Thyroid gland (tissue), 4 donors: ENCODE measurements at regions of chr13 and their contacts with region 1.

Region 1: GRCh38 chr13:31742097-31742734 is 2.9 kb downstream of the RXFP2 start:
- DNase-seq: peak; percentile 50 to 59
- H3K4me3 ChIP-seq: no peak overlapping the region
- H3K27ac ChIP-seq: no peak overlapping the region
- H3K4me1 ChIP-seq: peaks cover 5 to 6% of the 10 kb centered on the region in 2 donors
- H3K27me3 ChIP-seq: no peaks in the 10 kb centered on the region
- CTCF ChIP-seq: peak; percentile 75 to 100 (median 84)
- POLR2A ChIP-seq: no peak

Region 2: DNA sequence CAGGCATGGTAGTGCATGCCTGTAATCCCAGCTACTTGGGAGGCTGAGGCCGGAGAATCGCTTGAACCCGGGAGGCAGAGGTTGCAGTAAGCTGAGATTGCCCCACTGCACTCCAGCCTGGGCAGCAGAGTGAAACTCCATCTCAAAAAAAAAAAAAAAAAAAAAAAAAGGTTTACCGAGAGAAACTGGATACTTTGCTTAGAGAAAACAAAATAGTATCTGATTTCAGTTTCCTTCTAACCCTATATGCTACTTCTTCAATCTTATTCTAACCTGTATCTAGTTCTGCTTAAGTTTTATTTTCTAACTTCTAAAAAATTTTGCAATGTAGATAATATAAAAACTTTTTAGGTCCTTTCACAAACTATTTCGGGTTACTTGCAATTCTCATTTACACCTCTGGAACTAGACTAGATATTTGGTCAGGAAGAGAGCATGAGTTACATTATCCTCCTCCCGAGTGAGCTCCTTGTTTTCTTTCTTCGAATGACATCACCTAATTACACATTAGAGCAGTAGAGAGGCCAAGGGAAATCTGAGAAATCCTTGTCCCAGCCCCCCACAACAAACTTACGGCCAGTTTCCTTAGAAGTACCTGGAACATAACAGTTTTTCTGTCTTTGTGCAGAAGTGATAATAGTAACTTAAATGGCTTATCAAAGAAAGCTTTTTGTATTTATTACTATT is 413.5 kb before region 1 on chr13:
- intact Hi-C with region 1: no loop called
- DNase-seq: no peak
- H3K4me3 ChIP-seq: no peak overlapping the region
- H3K27ac ChIP-seq: no peak overlapping the region
- H3K4me1 ChIP-seq: no peaks in the 10 kb centered on the region
- H3K27me3 ChIP-seq: no peaks in the 10 kb centered on the region
- CTCF ChIP-seq: no peak
- POLR2A ChIP-seq: no peak

Region 3: GRCh38 chr13:31556376-31556775 is 185.8 kb before region 1 on chr13:
- intact Hi-C with region 1: no loop called
- DNase-seq: no peak
- H3K4me3 ChIP-seq: no peak overlapping the region
- H3K27ac ChIP-seq: no peak overlapping the region
- H3K4me1 ChIP-seq: no peaks in the 10 kb centered on the region
- H3K27me3 ChIP-seq: no peaks in the 10 kb centered on the region
- CTCF ChIP-seq: no peak
- POLR2A ChIP-seq: no peak

Region 4: DNA sequence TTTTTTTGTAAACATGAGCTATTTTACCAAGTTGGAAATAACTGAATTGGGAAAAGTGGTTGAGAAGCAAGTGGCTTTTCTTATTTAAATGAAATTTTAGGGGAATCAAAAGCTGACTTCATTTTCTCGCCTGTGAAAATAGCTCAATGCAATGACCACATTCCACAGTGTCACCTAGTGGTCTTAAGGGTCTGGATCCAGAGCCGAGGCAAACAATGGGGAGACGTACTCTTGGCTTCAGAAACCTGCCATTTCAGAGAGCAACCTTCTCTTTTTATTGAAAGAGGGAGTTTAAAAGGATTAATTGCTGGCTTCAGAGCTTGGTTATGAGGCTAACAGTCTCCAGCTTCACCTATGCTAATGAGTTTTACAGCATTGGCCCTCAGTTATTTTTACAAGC is 42.6 kb before region 1 on chr13:
- intact Hi-C with region 1: no loop called
- DNase-seq: no peak
- H3K4me3 ChIP-seq: no peak overlapping the region
- H3K27ac ChIP-seq: no peak overlapping the region
- H3K4me1 ChIP-seq: no peaks in the 10 kb centered on the region
- H3K27me3 ChIP-seq: no peaks in the 10 kb centered on the region
- CTCF ChIP-seq: no peak
- POLR2A ChIP-seq: no peak

Region 5: DNA sequence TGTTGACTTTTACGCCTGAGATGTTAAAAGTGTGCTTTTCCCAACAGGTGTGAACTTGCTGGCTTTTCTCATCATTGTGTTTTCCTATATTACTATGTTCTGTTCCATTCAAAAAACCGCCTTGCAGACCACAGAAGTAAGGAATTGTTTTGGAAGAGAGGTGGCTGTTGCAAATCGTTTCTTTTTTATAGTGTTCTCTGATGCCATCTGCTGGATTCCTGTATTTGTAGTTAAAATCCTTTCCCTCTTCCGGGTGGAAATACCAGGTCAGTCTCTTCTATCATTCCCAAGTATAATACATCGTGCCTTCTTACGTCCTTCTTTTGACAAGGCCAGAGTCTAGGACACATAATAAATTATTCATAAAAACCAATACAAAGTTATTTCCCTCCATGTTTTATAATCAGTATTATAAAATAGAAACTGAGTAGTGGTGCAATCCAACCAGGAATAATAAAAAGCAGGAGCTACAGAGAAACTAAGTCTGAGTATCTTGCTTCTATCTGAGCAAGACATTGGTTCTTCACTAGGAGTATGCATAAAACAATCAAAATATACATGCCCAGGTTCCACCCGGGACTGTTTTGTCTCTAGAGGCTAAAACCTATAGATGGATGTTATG is 55.0 kb after region 1 on chr13:
- intact Hi-C with region 1: loop called (anchors 5 kb)
- DNase-seq: no peak
- H3K4me3 ChIP-seq: no peak overlapping the region
- H3K27ac ChIP-seq: no peak overlapping the region
- H3K4me1 ChIP-seq: no peaks in the 10 kb centered on the region
- H3K27me3 ChIP-seq: no peaks in the 10 kb centered on the region
- CTCF ChIP-seq: peak in 4 of 6 experiments; percentile 9 to 68 (median 58)
- POLR2A ChIP-seq: no peak

Region 6: DNA sequence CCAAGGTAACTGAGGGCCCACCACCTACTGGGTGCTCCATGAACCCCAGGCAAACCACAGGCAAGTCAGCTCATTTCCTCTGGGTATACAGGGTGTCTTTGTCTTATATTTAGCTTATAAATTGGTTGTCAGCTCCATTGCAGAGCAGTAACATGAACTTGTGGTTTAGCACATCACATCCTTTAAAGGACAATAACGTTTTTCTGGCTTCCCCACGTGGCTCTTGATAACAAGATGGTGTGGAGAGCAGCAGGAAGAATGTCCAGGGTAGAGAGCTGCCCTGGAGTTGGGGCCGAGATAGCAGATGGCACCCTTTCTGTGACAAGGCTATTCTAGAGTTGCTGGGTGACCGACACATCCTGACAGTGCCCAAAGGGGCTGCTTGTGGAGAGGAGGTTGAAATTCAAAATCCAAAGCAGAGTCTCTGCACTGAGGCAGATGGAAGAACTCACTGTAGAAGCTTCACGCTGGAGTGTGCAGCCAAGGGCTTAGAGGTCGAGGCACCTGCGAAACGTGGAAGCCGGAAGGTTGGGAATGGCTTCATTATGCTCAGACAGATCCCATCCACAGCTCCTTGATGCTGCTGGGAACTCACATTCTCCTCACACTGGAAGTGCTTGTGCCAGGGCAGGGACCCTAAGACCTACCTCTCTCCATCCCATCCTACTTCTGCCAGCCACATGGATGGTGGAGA is 156.3 kb after region 1 on chr13:
- intact Hi-C with region 1: no loop called
- DNase-seq: no peak
- H3K4me3 ChIP-seq: no peak overlapping the region
- H3K27ac ChIP-seq: no peak overlapping the region
- H3K4me1 ChIP-seq: no peaks in the 10 kb centered on the region
- H3K27me3 ChIP-seq: no peaks in the 10 kb centered on the region
- CTCF ChIP-seq: no peak
- POLR2A ChIP-seq: no peak